Psoas muscle (tissue), 8 donors: ENCODE measurements at regions of chr1 and their contacts with region 1.

Region 1: DNA sequence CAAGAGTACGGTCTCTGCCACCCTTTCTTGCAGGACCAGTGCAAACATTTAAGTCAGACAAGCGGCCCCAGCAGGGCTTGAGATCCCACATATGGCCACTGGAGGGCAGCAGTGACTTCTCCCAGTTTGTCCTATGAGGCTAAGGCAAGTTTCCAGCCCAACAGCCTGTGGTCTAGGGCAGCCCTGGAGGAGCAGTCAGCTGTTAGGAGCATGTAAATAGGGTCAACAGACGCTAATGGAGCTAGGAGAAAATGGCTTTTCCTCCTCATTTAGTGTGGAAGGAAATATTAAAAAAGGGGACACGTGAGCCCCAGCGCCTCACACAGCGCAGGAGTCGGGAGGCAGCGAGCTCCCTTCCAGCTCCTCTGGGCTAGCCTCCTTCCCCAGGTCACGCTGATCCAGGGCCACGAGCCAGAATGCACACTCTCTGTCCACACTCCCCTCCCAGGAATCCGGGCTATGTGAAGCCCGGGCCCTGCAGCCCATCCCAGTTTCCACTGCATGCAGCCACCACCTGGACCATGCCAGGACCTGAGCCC is 95.6 kb downstream of the LAMC2 start:
- DNase-seq: peak; percentile 85 to 94
- ATAC-seq: peak; percentile 89 to 95 (median 93)
- H3K4me3 ChIP-seq: peak overlapping the region; percentile 51
- H3K27ac ChIP-seq: peak overlapping the region; percentile 78
- H3K4me1 ChIP-seq: peaks cover 16% of the 10 kb centered on the region
- H3K27me3 ChIP-seq: no peaks in the 10 kb centered on the region
- CTCF ChIP-seq: peak; percentile 94

Region 2: GRCh38 chr1:182990413-182991144 is 291.0 kb before region 1 on chr1:
- intact Hi-C with region 1: no loop called
- DNase-seq: no peak
- ATAC-seq: peak in 1 of 4 donors; percentile 54
- H3K4me3 ChIP-seq: no peak overlapping the region
- H3K27ac ChIP-seq: no peak overlapping the region
- H3K4me1 ChIP-seq: no peaks in the 10 kb centered on the region
- H3K27me3 ChIP-seq: no peaks in the 10 kb centered on the region
- CTCF ChIP-seq: no peak

Region 3: GRCh38 chr1:183318433-183318832 is 36.8 kb after region 1 on chr1:
- intact Hi-C with region 1: loop called (anchors 1 to 5 kb)
- DNase-seq: peak; percentile 73 to 81
- ATAC-seq: peak; percentile 94 to 98 (median 97)
- H3K4me3 ChIP-seq: no peak overlapping the region
- H3K27ac ChIP-seq: no peak overlapping the region
- H3K4me1 ChIP-seq: peaks cover 9% of the 10 kb centered on the region
- H3K27me3 ChIP-seq: no peaks in the 10 kb centered on the region
- CTCF ChIP-seq: peak; percentile 56

Region 4: DNA sequence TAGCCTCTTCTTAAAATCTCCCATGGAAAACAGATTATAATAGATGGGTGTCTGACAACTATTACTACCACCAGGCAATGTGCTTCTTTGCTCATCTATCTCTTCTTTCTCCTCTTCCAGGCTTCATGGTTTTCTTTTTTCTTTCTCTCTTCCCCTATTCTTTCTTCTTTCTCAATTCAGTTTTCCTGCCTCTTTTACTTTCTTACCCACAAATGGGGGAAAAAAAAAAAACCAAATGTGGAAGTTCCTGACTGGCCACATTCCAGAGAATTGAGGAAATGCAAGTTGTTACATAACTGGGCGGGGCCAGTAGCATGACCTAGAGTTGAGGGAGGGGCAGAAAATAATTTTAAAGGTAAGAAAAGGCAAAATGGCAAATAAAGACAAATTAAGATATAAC is 179.7 kb after region 1 on chr1:
- intact Hi-C with region 1: loop called in 1 of 2 experiments (anchors 10 kb)
- DNase-seq: no peak
- ATAC-seq: no peak
- H3K4me3 ChIP-seq: no peak overlapping the region
- H3K27ac ChIP-seq: no peak overlapping the region
- H3K4me1 ChIP-seq: no peaks in the 10 kb centered on the region
- H3K27me3 ChIP-seq: peaks cover 0 to 6% (median 2%) of the 10 kb centered on the region in 3 donors
- CTCF ChIP-seq: no peak

Region 5: DNA sequence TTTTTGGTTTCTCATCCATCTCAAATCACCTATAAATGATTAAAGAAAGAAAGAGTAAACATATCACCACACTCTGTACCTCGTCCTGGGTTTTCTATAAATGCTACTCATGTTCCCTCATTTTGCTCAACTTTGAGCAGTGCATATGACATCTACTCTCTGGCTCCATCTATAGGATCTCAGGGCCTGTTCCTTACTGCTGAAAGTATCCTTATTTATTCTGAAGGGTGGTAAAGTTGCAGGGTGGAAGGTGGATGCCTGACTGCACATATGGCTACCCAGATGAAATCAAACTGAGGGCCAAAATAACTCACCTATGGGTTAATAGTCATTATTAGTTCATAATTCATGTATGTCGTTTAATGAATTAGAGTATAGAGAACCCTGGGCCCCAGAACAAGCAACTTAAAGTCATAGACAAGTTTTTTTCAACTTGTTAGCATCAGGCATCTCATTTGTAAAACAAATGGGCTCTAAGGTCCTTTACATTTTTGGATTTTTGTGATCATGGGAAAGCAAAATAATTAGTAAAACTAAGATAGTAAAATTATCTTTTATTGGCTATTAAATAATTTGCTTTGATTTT is 262.1 kb after region 1 on chr1:
- intact Hi-C with region 1: loop called in 1 of 2 experiments (anchors 5 kb)
- DNase-seq: no peak
- ATAC-seq: peak; percentile 43 to 87 (median 70)
- H3K4me3 ChIP-seq: no peak overlapping the region
- H3K27ac ChIP-seq: no peak overlapping the region
- H3K4me1 ChIP-seq: no peaks in the 10 kb centered on the region
- H3K27me3 ChIP-seq: no peaks in the 10 kb centered on the region
- CTCF ChIP-seq: peak; percentile 57

Region 6: DNA sequence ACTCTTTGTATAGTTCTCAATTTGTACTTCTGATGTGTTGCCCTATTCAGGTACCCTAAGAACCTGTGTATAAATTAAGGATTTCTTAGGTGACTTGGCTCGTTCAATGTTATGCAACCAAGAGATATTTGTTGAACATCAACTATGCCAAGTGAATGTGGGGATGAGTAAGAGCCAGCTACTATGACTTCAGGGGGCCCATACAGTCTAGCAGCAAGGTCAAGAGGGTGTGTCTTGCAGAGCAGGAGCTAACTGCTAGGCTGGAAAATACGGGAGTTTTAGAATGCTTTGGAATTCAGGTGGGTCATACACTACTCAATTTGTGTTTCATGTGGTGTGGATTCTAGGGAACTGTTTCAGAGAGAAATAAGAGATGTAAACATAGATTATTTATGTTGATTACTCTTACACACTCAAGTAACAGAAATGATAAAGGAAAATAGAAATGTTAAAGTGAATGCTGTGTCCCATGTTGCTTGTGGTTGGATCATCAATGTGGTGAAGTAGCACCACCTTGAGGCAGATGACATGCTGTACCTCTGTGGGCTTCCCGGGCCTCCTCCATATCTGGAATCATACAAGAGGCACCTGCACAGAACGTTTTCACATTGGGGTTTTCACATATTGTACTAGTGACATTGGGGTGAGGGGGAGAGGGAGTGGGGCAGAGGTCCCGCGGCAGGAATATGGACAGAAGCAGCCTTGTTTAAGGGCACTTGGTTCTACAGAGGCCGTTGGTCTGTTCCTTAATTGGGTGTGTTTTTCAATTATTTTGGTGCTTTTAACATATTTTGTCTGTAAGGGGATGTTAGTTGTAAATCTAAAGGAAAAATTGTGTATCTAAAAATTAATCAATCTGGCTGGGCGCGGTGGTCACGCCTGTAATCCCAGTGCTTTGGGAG is 341.5 kb after region 1 on chr1:
- intact Hi-C with region 1: loop called in 1 of 2 experiments (anchors 5 kb)
- DNase-seq: no peak
- ATAC-seq: peak; percentile 79 to 92 (median 86)
- H3K4me3 ChIP-seq: no peak overlapping the region
- H3K27ac ChIP-seq: no peak overlapping the region
- H3K4me1 ChIP-seq: peaks cover 8% of the 10 kb centered on the region
- H3K27me3 ChIP-seq: no peaks in the 10 kb centered on the region
- CTCF ChIP-seq: peak; percentile 62